ENCODE measurements at regions of chr6 and their contacts with region 1.

Region 1: DNA sequence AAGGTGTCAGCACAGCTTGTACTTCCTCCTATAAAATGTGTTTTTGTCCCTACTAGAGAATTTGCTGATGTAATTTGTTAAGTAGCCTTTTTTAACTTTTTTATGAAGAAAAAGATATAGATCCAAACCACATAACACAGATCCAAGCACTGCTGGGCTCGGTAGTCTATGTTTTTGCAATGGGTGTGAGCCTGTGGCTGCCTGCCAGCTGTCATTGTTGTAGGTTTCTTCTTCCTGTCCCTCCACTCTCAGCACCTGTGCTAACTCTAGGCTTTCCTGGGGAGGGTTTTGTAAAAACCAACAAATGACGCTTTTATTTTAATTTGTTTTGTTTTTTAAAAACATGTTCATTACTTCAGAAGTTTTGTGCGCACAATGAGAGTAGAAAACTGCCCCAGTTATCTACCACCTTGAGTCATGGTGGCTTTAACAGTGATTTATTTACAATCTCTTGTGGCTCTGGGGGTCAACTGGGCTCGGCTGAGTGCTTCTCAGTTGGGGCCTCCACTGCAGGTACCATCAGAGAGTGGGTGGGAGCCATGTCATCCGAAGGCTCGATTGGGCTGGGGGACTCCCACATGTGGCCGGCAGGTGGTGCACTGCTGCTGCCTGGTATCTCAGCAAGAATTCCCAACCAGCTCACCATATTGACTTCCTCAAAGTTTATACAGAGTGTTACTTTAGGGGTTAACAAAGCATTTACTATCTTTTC is 3.1 kb upstream of the CCR6 start:
- DNase-seq: no peak
- CTCF ChIP-seq: peak; percentile 37

Region 2: DNA sequence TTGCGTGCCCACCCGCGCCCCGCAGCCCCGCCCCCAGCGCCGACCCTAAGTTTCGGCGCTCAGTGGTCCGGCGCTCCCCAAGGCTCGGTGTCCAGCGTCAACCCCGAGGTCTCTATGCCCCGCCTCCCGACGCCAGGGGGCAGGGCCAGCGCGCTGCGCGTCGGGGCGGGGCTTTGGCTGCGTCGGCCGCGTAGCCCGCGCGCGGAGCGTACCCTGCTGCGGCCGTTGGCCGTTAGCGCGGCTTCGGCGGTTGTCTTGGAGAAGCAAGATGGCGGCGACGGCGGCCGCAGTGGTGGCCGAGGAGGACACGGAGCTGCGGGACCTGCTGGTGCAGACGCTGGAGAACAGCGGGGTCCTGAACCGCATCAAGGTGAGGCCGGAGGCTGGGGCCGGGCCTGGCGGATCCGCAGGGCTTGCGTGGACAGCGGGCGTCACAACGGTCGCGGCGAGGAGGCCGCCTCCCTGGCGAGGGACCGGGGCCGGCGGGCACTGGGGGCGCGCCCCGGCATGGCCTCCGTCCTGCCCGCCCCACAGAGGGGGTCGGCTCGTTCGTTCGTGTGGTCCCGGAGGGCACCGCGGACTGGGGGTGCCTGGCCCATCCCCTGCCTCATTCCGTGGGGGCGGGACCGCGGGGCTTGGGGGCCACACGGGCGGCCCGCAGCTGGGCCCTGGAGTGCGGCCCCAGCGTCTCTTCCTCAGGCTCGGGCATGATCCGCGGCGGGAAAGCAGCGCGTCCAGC is 120.5 kb before region 1 on chr6 and contains the start of gene CEP43:
- CTCF ChIA-PET with region 1: interaction called, 12 read pairs
- POLR2A ChIA-PET with region 1: interaction called, 3 read pairs
- DNase-seq: peak; percentile 98
- CTCF ChIP-seq: no peak

Region 3: GRCh38 chr6:167093922-167094432 is 25.8 kb before region 1 on chr6:
- CTCF ChIA-PET with region 1: interaction called, 12 read pairs
- POLR2A ChIA-PET with region 1: interaction called, 22 read pairs
- DNase-seq: peak; percentile 88
- CTCF ChIP-seq: no peak

Region 4: GRCh38 chr6:167130008-167130677 is 10.3 kb after region 1 on chr6:
- CTCF ChIA-PET with region 1: interaction called, 135 read pairs
- POLR2A ChIA-PET with region 1: no interaction called
- DNase-seq: peak; percentile 65
- CTCF ChIP-seq: no peak

Region 5: GRCh38 chr6:167163476-167164011 is 43.7 kb after region 1 on chr6:
- CTCF ChIA-PET with region 1: no interaction called
- POLR2A ChIA-PET with region 1: no interaction called
- DNase-seq: no peak
- CTCF ChIP-seq: no peak

Region 6: DNA sequence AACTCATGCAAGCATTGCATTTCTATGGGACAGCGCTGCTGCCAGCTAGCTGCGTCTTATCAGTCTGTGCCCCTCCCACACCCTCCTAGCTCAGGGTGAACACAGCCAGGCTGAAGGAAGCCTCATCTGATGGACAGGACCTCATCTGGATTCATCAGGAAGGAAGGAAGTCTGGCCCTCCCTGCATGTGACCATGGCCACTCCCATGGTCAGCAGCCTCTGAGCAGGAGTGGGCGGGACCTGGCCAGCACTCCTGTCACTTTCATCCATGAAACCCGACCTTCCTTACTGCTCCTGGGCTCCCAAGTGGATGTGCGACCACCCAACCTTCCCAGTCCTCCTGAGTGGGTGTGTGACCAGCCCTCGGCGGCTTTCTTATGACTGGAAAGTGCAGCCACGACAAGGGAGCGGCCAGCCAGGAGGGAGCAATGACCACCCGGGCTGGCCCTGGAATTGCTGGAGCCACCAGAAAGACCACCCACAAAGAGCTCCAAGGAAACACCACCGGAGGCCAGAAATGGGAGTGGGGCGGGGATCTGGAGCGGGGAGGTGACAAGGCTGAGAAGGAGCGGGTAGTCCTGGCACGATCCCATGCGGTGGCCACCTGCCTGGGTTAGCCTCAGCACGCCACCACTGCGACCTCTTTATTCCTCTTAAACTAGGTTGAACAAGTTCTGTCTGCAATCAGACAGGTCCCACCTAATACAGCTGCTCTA is 446.2 kb after region 1 on chr6:
- CTCF ChIA-PET with region 1: no interaction called
- POLR2A ChIA-PET with region 1: no interaction called
- DNase-seq: no peak
- CTCF ChIP-seq: no peak

Measured in GM10248 (cell line).